Mucosa of descending colon (tissue), 3 donors: ENCODE measurements at regions of chr2 and their contacts with region 1.

Region 1: GRCh38 chr2:36355151-36355889 is at the start of gene CRIM1:
- DNase-seq: peak; percentile 90 to 94 (median 92)
- ATAC-seq: peak; percentile 79
- H3K4me3 ChIP-seq: peak within 1 kb of the TSS; percentile 65
- H3K4me1 ChIP-seq: peaks cover 19% of the 10 kb centered on the region
- CTCF ChIP-seq: no peak
- total RNA-seq, gene CRIM1: 66.9 to 104 (median 85.8) TPM

Region 2: GRCh38 chr2:36197181-36197971 is 157.9 kb before region 1 on chr2:
- intact Hi-C with region 1: no loop called
- DNase-seq: no peak
- ATAC-seq: no peak
- H3K4me3 ChIP-seq: no peak overlapping the region
- H3K4me1 ChIP-seq: no peaks in the 10 kb centered on the region
- CTCF ChIP-seq: no peak

Region 3: GRCh38 chr2:36507408-36507812 is 152.1 kb after region 1 on chr2:
- intact Hi-C with region 1: loop called in 1 of 2 experiments (anchors 10 kb)
- DNase-seq: peak in 1 of 3 donors; percentile 73
- ATAC-seq: peak; percentile 88
- H3K4me3 ChIP-seq: no peak overlapping the region
- H3K4me1 ChIP-seq: no peaks in the 10 kb centered on the region
- CTCF ChIP-seq: peak; percentile 44

Region 4: DNA sequence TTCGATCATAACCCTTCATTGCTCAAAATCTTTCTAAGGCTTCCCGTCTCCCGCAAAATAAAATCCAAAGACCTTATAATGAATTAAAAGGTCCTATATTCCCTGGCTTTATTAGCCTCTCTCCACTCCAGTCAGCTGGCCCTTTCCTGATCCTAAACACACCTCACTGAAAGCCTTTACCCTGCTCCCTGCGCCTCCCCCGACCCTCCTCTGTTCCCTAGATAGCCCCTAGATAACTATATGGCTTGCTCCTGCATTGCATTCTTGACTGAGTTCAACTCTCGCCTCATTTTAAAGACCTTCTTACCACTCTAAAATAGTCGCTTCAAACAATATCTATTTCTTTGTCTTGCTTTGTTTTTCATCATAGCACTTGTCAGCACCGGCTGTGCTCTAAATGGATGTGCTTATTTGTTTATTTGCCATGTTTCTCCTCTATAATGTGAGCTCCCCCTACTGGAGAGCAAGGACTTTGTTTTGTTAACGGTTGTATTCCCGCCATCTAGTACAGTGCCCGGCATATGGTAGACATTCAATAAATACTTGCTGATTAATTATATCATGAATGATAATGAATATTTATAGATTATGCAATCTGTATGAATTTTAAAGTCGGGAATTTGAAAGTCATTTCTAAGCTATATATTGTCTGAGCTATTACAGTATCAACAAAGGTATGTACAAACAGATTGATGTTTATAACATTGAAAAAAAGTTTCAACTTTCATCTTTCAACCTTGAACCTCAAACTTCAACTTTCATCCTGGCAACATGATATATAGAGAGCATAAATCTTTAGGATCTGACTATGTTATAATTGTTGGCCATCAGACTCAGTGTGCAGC is 308.8 kb after region 1 on chr2:
- intact Hi-C with region 1: loop called (anchors 5 to 10 kb)
- DNase-seq: peak in 1 of 3 donors; percentile 53
- ATAC-seq: peak; percentile 85
- H3K4me3 ChIP-seq: no peak overlapping the region
- H3K4me1 ChIP-seq: no peaks in the 10 kb centered on the region
- CTCF ChIP-seq: peak; percentile 54

Region 5: GRCh38 chr2:36785179-36785795 is 430.0 kb after region 1 on chr2:
- intact Hi-C with region 1: loop called in 1 of 2 experiments (anchors 5 kb)
- DNase-seq: peak in 2 of 3 donors; percentile 79
- ATAC-seq: peak; percentile 93
- H3K4me3 ChIP-seq: no peak overlapping the region
- H3K4me1 ChIP-seq: peaks cover 4% of the 10 kb centered on the region
- CTCF ChIP-seq: peak; percentile 96